ENCODE measurements at regions of chr4 and their contacts with region 1.

Region 1: DNA sequence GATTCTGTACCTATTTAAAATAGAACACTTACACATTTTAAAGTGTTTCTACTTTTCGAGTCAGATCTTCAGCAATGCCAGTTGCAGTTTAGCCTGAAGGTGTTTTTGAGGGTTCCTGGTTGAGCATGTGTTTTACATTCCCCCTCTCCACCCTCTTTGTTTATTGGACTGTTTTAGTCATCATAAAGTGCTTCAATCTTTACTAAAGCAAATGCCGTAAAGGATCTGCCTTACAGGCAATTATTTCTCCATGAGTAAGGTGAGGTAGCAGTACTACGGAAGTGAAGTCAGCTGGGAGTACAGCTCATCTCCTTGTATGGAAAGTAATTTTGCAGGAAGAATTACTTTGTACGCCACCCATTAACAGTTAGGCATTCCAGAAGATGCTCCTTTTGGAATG is 36.9 kb downstream of the PDLIM5 start:
- DNase-seq: peak; percentile 91
- H3K4me3 Mint-ChIP-seq: peak overlapping the region; percentile 56
- H3K27ac Mint-ChIP-seq: peak overlapping the region; percentile 88
- H3K4me1 Mint-ChIP-seq: peaks cover 26% of the 10 kb centered on the region
- H3K27me3 Mint-ChIP-seq: no peaks in the 10 kb centered on the region
- CTCF ChIP-seq: no peak

Region 2: DNA sequence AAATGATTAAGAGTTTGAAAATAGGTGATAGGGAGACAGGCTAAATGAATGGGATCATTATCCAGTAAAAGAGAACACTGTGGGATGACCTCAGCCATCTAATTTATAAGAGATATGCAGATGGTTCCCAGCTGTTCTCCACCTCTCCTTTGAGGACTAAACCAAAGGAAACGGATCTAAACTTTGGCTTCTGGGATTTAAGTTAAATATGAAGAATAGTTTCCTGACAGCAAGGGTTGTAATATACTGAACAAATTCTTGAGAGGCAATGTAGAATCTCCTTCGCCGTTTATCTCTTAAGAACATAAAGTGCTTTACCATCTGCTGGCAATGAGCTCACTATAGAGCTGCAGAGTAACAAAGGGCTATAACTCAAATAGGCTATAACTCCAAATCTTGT is 110.6 kb before region 1 on chr4:
- CTCF ChIA-PET with region 1: no interaction called
- POLR2A ChIA-PET with region 1: no interaction called
- intact Hi-C with region 1: no loop called
- DNase-seq: no peak
- H3K4me3 Mint-ChIP-seq: no peak overlapping the region
- H3K27ac Mint-ChIP-seq: no peak overlapping the region
- H3K4me1 Mint-ChIP-seq: no peaks in the 10 kb centered on the region
- H3K27me3 Mint-ChIP-seq: no peaks in the 10 kb centered on the region
- CTCF ChIP-seq: no peak

Region 3: GRCh38 chr4:94406668-94407437 is 81.8 kb before region 1 on chr4:
- CTCF ChIA-PET with region 1: interaction called, 6 read pairs
- POLR2A ChIA-PET with region 1: interaction called, 10 read pairs
- intact Hi-C with region 1: loop called (anchors 2 kb)
- DNase-seq: peak; percentile 86
- H3K4me3 Mint-ChIP-seq: no peak overlapping the region
- H3K27ac Mint-ChIP-seq: no peak overlapping the region
- H3K4me1 Mint-ChIP-seq: peaks cover 7% of the 10 kb centered on the region
- H3K27me3 Mint-ChIP-seq: no peaks in the 10 kb centered on the region
- CTCF ChIP-seq: peak; percentile 82

Region 4: GRCh38 chr4:94463771-94464170 is 24.9 kb before region 1 on chr4:
- CTCF ChIA-PET with region 1: interaction called, 3 read pairs
- POLR2A ChIA-PET with region 1: interaction called, 14 read pairs
- intact Hi-C with region 1: no loop called
- DNase-seq: no peak
- H3K4me3 Mint-ChIP-seq: no peak overlapping the region
- H3K27ac Mint-ChIP-seq: peak overlapping the region; percentile 68
- H3K4me1 Mint-ChIP-seq: peaks cover 55% of the 10 kb centered on the region
- H3K27me3 Mint-ChIP-seq: no peaks in the 10 kb centered on the region
- CTCF ChIP-seq: no peak

Region 5: GRCh38 chr4:94516067-94516466 is 27.4 kb after region 1 on chr4:
- CTCF ChIA-PET with region 1: interaction called, 3 read pairs
- POLR2A ChIA-PET with region 1: interaction called, 16 read pairs
- intact Hi-C with region 1: no loop called
- DNase-seq: peak; percentile 52
- H3K4me3 Mint-ChIP-seq: no peak overlapping the region
- H3K27ac Mint-ChIP-seq: peak overlapping the region; percentile 86
- H3K4me1 Mint-ChIP-seq: peaks cover 28% of the 10 kb centered on the region
- H3K27me3 Mint-ChIP-seq: no peaks in the 10 kb centered on the region
- CTCF ChIP-seq: no peak

Region 6: GRCh38 chr4:94548571-94548970 is 59.9 kb after region 1 on chr4:
- CTCF ChIA-PET with region 1: no interaction called
- POLR2A ChIA-PET with region 1: interaction called, 4 read pairs
- intact Hi-C with region 1: loop called (anchors 5 kb)
- DNase-seq: peak; percentile 76
- H3K4me3 Mint-ChIP-seq: peak overlapping the region; percentile 37
- H3K27ac Mint-ChIP-seq: peak overlapping the region; percentile 91
- H3K4me1 Mint-ChIP-seq: peaks cover 32% of the 10 kb centered on the region
- H3K27me3 Mint-ChIP-seq: no peaks in the 10 kb centered on the region
- CTCF ChIP-seq: no peak

Region 7: GRCh38 chr4:94595879-94596483 is 107.3 kb after region 1 on chr4:
- CTCF ChIA-PET with region 1: no interaction called
- POLR2A ChIA-PET with region 1: no interaction called
- intact Hi-C with region 1: no loop called
- DNase-seq: peak; percentile 63
- H3K4me3 Mint-ChIP-seq: no peak overlapping the region
- H3K27ac Mint-ChIP-seq: no peak overlapping the region
- H3K4me1 Mint-ChIP-seq: peaks cover 5% of the 10 kb centered on the region
- H3K27me3 Mint-ChIP-seq: no peaks in the 10 kb centered on the region
- CTCF ChIP-seq: peak; percentile 66

Measured in MCF 10A (cell line).